ENCODE measurements at regions of chr12 and their contacts with region 1.

Region 1: DNA sequence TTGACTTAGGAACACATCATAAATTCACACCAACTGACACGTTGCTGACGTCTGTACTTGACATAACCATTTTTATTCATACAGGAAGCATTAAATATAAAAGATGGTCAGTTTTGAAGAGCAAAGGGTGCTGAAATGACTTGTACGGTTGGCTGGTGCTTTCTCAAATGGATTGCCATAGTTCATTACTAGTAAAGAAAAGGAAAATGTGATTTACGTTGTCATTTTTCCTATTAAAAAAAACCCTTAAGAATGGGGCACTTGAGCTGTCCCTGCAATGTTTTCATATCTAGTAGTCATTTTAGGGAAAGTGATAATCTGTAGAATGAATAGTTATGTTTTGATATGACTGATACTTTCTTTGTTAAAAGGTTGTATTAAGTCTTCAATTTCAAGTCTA is 22.5 kb upstream of the MANSC4 start:
- DNase-seq: peak; percentile 49
- H3K4me3 Mint-ChIP-seq: no peak overlapping the region
- H3K27ac Mint-ChIP-seq: peak overlapping the region; percentile 85
- H3K4me1 Mint-ChIP-seq: peaks cover 59% of the 10 kb centered on the region
- H3K27me3 Mint-ChIP-seq: peaks cover 4% of the 10 kb centered on the region

Region 2: DNA sequence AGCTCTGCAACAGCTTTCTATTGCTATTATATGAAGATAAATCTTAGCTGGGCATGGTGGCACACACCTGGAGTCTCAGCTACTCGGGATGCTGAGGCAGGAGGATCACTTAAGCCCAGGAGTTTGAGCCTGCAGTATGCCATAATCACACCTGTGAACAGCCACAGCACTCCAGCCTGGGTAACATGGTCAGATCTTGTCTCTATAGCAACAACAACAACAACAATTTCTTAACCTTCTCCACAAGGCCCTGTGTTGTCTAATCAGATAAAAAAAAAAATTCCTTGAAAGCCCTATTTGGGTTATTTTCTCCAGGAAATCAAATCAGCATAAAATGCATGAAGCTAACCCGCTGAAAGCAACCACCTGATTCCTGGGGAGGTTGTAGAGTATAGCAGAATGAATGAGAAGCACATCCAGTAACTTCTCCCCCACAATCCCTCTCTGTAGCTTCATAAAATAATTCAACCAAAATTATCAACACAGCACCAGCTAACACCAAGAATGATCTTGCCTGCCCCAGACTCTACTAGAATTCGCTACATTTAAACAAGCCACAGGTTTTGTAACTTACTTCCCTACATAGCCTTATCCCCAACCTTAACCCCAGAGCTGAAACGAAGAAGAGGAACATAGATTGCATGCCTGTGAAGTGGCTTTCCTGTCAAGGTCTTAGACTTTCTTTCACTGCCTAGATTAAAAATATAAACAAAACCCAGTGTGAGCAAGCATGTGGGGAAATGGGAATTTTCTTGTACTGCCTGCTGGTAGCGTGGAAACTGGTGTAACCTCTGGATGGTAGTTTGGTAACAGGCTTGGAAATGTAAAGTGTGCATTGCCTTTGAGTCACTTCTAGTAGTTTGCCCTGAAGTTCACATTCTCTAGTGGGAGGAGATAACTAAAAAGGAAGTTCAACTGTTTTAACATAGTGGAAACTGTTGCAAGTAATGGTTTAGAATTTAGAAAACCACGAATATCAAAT is 564.4 kb before region 1 on chr12:
- CTCF ChIA-PET with region 1: no interaction called
- intact Hi-C with region 1: loop called (anchors 5 kb)
- DNase-seq: peak; percentile 16
- H3K4me3 Mint-ChIP-seq: peak overlapping the region; percentile 13
- H3K27ac Mint-ChIP-seq: peak overlapping the region; percentile 64
- H3K4me1 Mint-ChIP-seq: peaks cover 33% of the 10 kb centered on the region
- H3K27me3 Mint-ChIP-seq: no peaks in the 10 kb centered on the region

Region 3: GRCh38 chr12:27779920-27780611 is 22.4 kb before region 1 on chr12 and contains the starts of genes KLHL42 and MANSC4:
- CTCF ChIA-PET with region 1: interaction called, 3 read pairs
- intact Hi-C with region 1: loop called (anchors 1 kb)
- DNase-seq: peak; percentile 71
- H3K4me3 Mint-ChIP-seq: peak within 1 kb of the TSS; percentile 82
- H3K27ac Mint-ChIP-seq: peak within 1 kb of the TSS; percentile 80
- H3K4me1 Mint-ChIP-seq: peaks cover 27% of the 10 kb centered on the region
- H3K27me3 Mint-ChIP-seq: no peaks in the 10 kb centered on the region
- total RNA-seq, gene KLHL42: 9.4 to 9.8 TPM
- total RNA-seq, gene MANSC4: not detected

Region 4: GRCh38 chr12:27785882-27786570 is 16.5 kb before region 1 on chr12:
- CTCF ChIA-PET with region 1: no interaction called
- intact Hi-C with region 1: loop called (anchors 1 kb)
- DNase-seq: no peak
- H3K4me3 Mint-ChIP-seq: no peak overlapping the region
- H3K27ac Mint-ChIP-seq: peak overlapping the region; percentile 69
- H3K4me1 Mint-ChIP-seq: peaks cover 47% of the 10 kb centered on the region
- H3K27me3 Mint-ChIP-seq: no peaks in the 10 kb centered on the region

Measured in activated naive CD4-positive, alpha-beta T cell treated with anti-CD3 and anti-CD28 coated beads for 36 hours (primary cell).